Prostate gland (tissue), 2 donors: ENCODE measurements at regions of chr21 and their contacts with region 1.

Region 1: GRCh38 chr21:45973659-45974072 is 7.9 kb upstream of the COL6A1 start:
- DNase-seq: peak; percentile 43
- H3K4me3 ChIP-seq: peak overlapping the region; percentile 29 to 43
- H3K27ac ChIP-seq: peak overlapping the region; percentile 79 to 82
- H3K4me1 ChIP-seq: peaks cover 9% of the 10 kb centered on the region
- H3K27me3 ChIP-seq: no peaks in the 10 kb centered on the region
- CTCF ChIP-seq: peak in 3 of 4 experiments; percentile 19 to 60 (median 57)
- POLR2A ChIP-seq: no peak

Region 2: DNA sequence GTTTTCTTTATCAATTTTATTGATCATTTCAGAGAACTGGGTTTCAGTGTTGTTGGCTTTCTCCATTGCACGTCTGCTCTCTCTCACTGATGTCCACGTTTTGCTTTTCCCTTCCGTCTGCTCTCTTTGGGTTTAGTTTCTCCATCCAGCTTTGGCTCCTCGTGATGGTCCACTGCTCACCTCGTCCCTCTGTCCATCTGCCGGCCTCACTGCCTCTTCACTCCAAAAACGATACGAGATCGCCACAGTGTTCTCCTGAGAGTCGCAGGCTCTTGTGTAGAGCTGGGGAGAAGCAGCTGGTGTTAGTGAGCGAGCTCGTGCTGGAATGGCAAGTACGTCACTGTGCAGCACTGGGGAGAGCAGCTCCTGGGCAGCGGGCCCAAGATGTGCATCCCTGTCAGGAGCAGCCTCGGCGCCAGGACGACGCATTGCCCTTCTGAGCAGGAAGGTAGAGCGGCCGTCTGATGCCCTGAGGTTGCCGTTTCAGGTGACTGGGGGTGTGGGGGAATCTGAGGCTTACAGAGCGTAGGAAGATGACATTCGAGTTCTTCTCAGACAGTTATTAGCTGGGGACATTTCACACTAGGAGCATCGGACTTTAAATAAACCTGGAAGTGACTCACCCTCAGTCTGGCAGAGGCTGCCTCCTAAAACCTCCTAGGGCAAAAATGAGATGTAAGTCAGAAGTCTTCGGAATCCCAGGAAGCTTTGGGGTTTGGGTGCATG is 361.6 kb before region 1 on chr21:
- intact Hi-C with region 1: no loop called
- DNase-seq: no peak
- H3K4me3 ChIP-seq: no peak overlapping the region
- H3K27ac ChIP-seq: no peak overlapping the region
- H3K4me1 ChIP-seq: no peaks in the 10 kb centered on the region
- H3K27me3 ChIP-seq: peaks cover 2% of the 10 kb centered on the region
- CTCF ChIP-seq: no peak
- POLR2A ChIP-seq: no peak

Region 3: DNA sequence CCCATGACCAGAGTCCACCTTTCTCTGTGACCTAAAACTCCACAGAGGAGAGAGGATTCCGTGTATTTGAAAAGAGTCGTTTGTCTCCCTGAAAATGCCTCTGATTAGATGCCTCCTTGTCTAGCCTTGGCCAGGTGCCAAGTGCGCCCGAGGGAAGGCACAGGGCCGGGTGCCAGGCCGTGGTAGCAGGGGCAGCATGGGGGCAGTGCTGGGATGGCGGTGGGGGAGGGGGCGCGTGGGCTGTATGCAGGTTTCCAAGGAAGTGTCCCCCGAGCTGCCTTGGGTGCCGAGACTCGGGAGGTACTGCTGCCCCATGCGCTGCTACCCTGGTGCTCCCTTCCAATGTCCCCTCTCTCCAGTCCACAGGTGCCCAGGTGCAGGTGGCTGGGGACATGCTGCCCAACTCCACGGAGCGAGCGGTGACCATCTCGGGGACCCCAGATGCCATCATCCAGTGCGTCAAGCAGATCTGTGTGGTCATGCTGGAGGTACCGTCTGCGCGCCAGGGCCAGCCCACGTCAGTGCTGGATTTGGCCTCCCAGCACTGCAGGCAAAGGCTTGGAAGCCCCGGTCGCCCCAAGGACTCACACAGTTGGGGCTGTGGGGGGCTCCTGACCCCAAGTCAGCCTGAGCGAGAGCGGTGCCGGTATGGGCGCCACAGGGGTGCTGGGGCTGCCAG is 63.0 kb before region 1 on chr21:
- intact Hi-C with region 1: no loop called
- DNase-seq: no peak
- H3K4me3 ChIP-seq: no peak overlapping the region
- H3K27ac ChIP-seq: no peak overlapping the region
- H3K4me1 ChIP-seq: no peaks in the 10 kb centered on the region
- H3K27me3 ChIP-seq: no peaks in the 10 kb centered on the region
- CTCF ChIP-seq: no peak
- POLR2A ChIP-seq: no peak

Region 4: DNA sequence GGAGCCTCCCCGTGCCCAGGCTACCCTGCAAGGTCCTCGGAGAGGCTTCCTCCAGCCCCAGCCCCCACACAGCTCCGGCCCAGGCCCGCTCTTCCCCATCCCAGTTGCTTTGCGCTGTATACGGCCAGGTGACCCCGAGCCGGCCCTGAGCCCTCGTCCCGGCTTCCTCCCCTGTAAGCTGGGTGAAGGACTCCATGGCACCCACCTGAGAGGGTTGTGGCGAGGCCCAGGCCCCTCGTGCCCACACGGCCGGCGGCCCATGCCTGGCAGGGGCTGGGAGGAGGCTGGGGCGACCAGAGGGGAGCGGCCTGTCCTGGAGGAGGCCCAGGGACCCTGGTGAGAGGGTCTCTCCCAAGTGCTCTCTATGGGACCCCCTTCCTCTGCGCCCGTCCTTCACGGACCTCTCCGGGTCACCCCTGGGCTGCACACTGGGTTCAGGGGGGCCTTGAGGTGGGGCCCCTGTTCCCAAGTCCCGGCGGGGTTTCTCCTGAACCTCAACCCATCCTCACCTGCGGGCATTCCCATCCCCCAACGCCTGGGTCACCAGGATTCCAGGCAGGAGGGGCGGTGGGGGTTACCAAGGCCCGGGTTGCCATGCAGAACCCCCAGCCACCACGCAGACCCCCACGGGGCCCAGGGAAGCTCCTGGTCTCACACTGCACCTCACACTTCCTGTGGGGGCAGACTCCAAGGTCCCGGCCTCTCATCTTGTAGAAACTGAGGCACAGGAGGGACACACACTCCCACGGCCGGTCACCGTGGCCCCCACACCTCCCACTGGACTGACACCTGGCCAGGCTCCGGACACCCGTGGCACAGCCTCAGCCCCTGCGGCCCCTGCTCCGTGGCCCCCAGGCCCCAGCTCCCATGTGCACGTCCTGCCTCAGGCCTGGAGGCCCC is 33.1 kb after region 1 on chr21:
- intact Hi-C with region 1: no loop called
- DNase-seq: peak; percentile 3
- H3K4me3 ChIP-seq: no peak overlapping the region
- H3K27ac ChIP-seq: no peak overlapping the region
- H3K4me1 ChIP-seq: no peaks in the 10 kb centered on the region
- H3K27me3 ChIP-seq: no peaks in the 10 kb centered on the region
- CTCF ChIP-seq: no peak
- POLR2A ChIP-seq: no peak

Region 5: GRCh38 chr21:46097336-46098293 is 123.9 kb after region 1 on chr21 and contains the start of gene COL6A2:
- intact Hi-C with region 1: loop called (anchors 2 kb)
- DNase-seq: peak; percentile 25
- H3K4me3 ChIP-seq: peak within 1 kb of the TSS; percentile 75 to 86
- H3K27ac ChIP-seq: peak within 1 kb of the TSS; percentile 88 to 91
- H3K4me1 ChIP-seq: no peaks in the 10 kb centered on the region
- H3K27me3 ChIP-seq: no peaks in the 10 kb centered on the region
- CTCF ChIP-seq: peak in 2 of 4 experiments; percentile 22 to 36
- POLR2A ChIP-seq: peak; percentile 12
- total RNA-seq, gene COL6A2: 198 to 474 TPM

Region 6: GRCh38 chr21:46228345-46229051 is 254.8 kb after region 1 on chr21 and contains the start of gene LSS:
- intact Hi-C with region 1: loop called (anchors 5 kb)
- DNase-seq: peak; percentile 98
- H3K4me3 ChIP-seq: peak within 1 kb of the TSS; percentile 99
- H3K27ac ChIP-seq: peak within 1 kb of the TSS; percentile 97 to 98
- H3K4me1 ChIP-seq: peaks cover 5% of the 10 kb centered on the region
- H3K27me3 ChIP-seq: no peaks in the 10 kb centered on the region
- CTCF ChIP-seq: no peak
- POLR2A ChIP-seq: peak; percentile 73
- total RNA-seq, gene LSS: 95.5 to 145 TPM